ENCODE measurements at regions of chr13 and their contacts with region 1.

Region 1: GRCh38 chr13:41668130-41668757 is 210.9 kb downstream of the RGCC start:
- DNase-seq: peak; percentile 60
- ATAC-seq: peak; percentile 99
- H3K4me3 ChIP-seq: no peak overlapping the region
- H3K27ac ChIP-seq: no peak overlapping the region
- H3K4me1 ChIP-seq: no peaks in the 10 kb centered on the region
- H3K27me3 ChIP-seq: no peaks in the 10 kb centered on the region
- CTCF ChIP-seq: peak; percentile 73 to 91 (median 78)
- EP300 ChIP-seq: no peak
- POLR2A ChIP-seq: no peak
- RAD21 ChIP-seq: peak; percentile 97

Region 2: GRCh38 chr13:41652727-41653361 is 15.4 kb before region 1 on chr13:
- CTCF ChIA-PET with region 1: interaction called, 16 read pairs
- POLR2A ChIA-PET with region 1: no interaction called
- RAD21 ChIA-PET with region 1: interaction called, 13 read pairs
- SMC1A ChIA-PET with region 1: interaction called, 26 read pairs
- in situ Hi-C with region 1: no loop called
- intact Hi-C with region 1: no loop called
- DNase-seq: no peak
- ATAC-seq: no peak
- H3K4me3 ChIP-seq: no peak overlapping the region
- H3K27ac ChIP-seq: no peak overlapping the region
- H3K4me1 ChIP-seq: no peaks in the 10 kb centered on the region
- H3K27me3 ChIP-seq: no peaks in the 10 kb centered on the region
- CTCF ChIP-seq: peak; percentile 15 to 53 (median 43); a peak in 5 of 6 replicates
- EP300 ChIP-seq: no peak
- POLR2A ChIP-seq: no peak
- RAD21 ChIP-seq: peak; percentile 91

Region 3: DNA sequence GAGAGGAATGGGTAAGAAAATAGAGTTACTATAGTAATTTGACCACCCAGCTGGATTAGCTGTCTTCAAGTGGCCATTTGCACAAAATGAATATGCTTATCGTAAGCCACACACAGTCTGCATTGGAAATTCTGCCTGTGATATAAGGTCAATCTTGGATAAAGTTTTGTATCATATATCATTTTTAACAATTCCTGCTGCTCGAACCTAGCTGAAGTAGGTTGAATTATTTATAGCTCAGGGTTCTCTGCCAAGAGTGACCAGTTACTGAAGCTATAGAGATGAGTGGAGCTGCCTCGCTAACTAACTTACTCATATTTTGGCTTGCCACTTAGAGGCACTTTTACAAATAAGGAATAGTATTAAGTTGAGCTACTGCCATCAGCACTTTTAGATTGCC is 10.0 kb after region 1 on chr13:
- CTCF ChIA-PET with region 1: interaction called, 49 read pairs
- POLR2A ChIA-PET with region 1: no interaction called
- RAD21 ChIA-PET with region 1: interaction called, 29 read pairs
- SMC1A ChIA-PET with region 1: interaction called, 47 read pairs
- in situ Hi-C with region 1: no loop called
- intact Hi-C with region 1: no loop called
- DNase-seq: no peak
- ATAC-seq: no peak
- H3K4me3 ChIP-seq: no peak overlapping the region
- H3K27ac ChIP-seq: no peak overlapping the region
- H3K4me1 ChIP-seq: peaks cover 7% of the 10 kb centered on the region; the same call in 1 of the 2 replicates
- H3K27me3 ChIP-seq: no peaks in the 10 kb centered on the region
- CTCF ChIP-seq: no peak
- EP300 ChIP-seq: no peak
- POLR2A ChIP-seq: no peak
- RAD21 ChIP-seq: no peak

Region 4: DNA sequence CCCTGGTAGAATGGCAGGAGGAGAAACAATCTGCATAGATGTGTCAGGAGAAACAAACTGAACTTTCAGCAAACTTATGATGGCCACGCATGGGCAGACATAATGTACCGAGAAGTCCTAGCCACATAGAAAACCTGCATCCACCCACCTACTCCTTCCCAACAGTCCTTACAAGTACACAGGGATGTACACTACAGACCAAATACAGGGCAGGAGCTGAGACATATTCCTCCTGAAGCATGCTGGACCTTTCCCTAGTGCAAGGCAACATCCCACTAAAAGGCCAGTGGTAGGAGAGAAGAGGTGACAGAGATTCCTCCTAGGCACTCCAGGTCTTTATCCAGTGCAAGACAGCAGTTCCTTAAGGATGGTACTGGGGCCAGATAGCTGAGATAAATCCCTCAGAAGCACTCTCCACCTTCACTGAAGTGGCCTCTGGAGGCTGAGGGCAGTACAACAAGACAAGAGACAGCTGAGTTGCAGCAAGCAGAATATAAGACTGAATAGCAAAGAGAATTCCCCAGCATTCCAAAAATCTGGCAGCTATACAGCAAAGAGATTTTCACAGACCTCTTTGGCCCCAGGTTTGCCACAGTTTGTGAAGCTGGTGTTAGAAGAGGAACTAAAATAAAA is 274.3 kb after region 1 on chr13:
- CTCF ChIA-PET with region 1: interaction called, 8 read pairs
- POLR2A ChIA-PET with region 1: no interaction called
- RAD21 ChIA-PET with region 1: interaction called, 15 read pairs
- SMC1A ChIA-PET with region 1: interaction called, 13 read pairs
- in situ Hi-C with region 1: no loop called
- intact Hi-C with region 1: no loop called
- DNase-seq: no peak
- ATAC-seq: peak; percentile 93
- H3K4me3 ChIP-seq: no peak overlapping the region
- H3K27ac ChIP-seq: no peak overlapping the region
- H3K4me1 ChIP-seq: no peaks in the 10 kb centered on the region
- H3K27me3 ChIP-seq: no peaks in the 10 kb centered on the region
- CTCF ChIP-seq: peak; percentile 31 to 39 (median 34); a peak in 4 of 6 replicates
- EP300 ChIP-seq: no peak
- POLR2A ChIP-seq: no peak
- RAD21 ChIP-seq: peak; percentile 55

Region 5: GRCh38 chr13:41960639-41961465 is 292.6 kb after region 1 on chr13 and contains the start of gene VWA8:
- CTCF ChIA-PET with region 1: interaction called, 11 read pairs
- POLR2A ChIA-PET with region 1: interaction called, 3 read pairs
- RAD21 ChIA-PET with region 1: interaction called, 5 read pairs
- SMC1A ChIA-PET with region 1: no interaction called
- in situ Hi-C with region 1: no loop called
- intact Hi-C with region 1: no loop called
- DNase-seq: no peak
- ATAC-seq: peak; percentile 93
- H3K4me3 ChIP-seq: peak within 1 kb of the TSS; percentile 82
- H3K27ac ChIP-seq: peak within 1 kb of the TSS; percentile 87
- H3K4me1 ChIP-seq: no peaks in the 10 kb centered on the region; the same call in 1 of the 2 replicates
- H3K27me3 ChIP-seq: no peaks in the 10 kb centered on the region
- CTCF ChIP-seq: 0 out of 6 replicates have a peak, but pooled peaks of 1 of the 3 experiments have one; percentile 2
- EP300 ChIP-seq: no peak
- POLR2A ChIP-seq: peak; percentile 85
- RAD21 ChIP-seq: no peak
- polyA plus RNA-seq, gene VWA8: 3.0 to 4.6 TPM

Region 6: GRCh38 chr13:42078128-42078808 is 410.0 kb after region 1 on chr13:
- CTCF ChIA-PET with region 1: interaction called, 18 read pairs
- POLR2A ChIA-PET with region 1: no interaction called
- RAD21 ChIA-PET with region 1: interaction called, 3 read pairs
- SMC1A ChIA-PET with region 1: interaction called, 17 read pairs
- in situ Hi-C with region 1: no loop called
- intact Hi-C with region 1: no loop called
- DNase-seq: no peak
- ATAC-seq: no peak
- H3K4me3 ChIP-seq: no peak overlapping the region
- H3K27ac ChIP-seq: no peak overlapping the region
- H3K4me1 ChIP-seq: no peaks in the 10 kb centered on the region
- H3K27me3 ChIP-seq: no peaks in the 10 kb centered on the region
- CTCF ChIP-seq: no peak; a peak in 1 of 6 replicates
- EP300 ChIP-seq: no peak
- POLR2A ChIP-seq: no peak
- RAD21 ChIP-seq: no peak

Region 7: GRCh38 chr13:42215578-42216421 is 547.6 kb after region 1 on chr13:
- CTCF ChIA-PET with region 1: interaction called, 21 read pairs
- POLR2A ChIA-PET with region 1: no interaction called
- RAD21 ChIA-PET with region 1: interaction called, 5 read pairs
- SMC1A ChIA-PET with region 1: interaction called, 11 read pairs
- in situ Hi-C with region 1: loop called (anchors 5 kb)
- intact Hi-C with region 1: loop called (anchors 5 kb)
- DNase-seq: peak; percentile 4
- ATAC-seq: peak; percentile 85
- H3K4me3 ChIP-seq: no peak overlapping the region
- H3K27ac ChIP-seq: no peak overlapping the region
- H3K4me1 ChIP-seq: no peaks in the 10 kb centered on the region
- H3K27me3 ChIP-seq: no peaks in the 10 kb centered on the region
- CTCF ChIP-seq: peak; percentile 55 to 60 (median 57); a peak in 5 of 6 replicates
- EP300 ChIP-seq: no peak
- POLR2A ChIP-seq: no peak
- RAD21 ChIP-seq: peak; percentile 72